Dorsolateral prefrontal cortex (tissue), 120 donors: ENCODE measurements at regions of chr1 and their contacts with region 1.

Region 1: GRCh38 chr1:180527101-180527669 is 24.8 kb upstream of the ACBD6 start:
- DNase-seq: peak in 1 of 10 donors; percentile 5
- H3K4me3 ChIP-seq: no peak overlapping the region
- H3K27ac ChIP-seq: no peak overlapping the region
- H3K27me3 ChIP-seq: no peaks in the 10 kb centered on the region
- CTCF ChIP-seq: no peak

Region 2: GRCh38 chr1:181424786-181425403 is 897.7 kb after region 1 on chr1:
- intact Hi-C with region 1: loop called in 1 of 2 experiments (anchors 10 kb)
- DNase-seq: peak; percentile 60 to 85 (median 75)
- H3K4me3 ChIP-seq: peak overlapping the region in 20 of 59 donors; percentile 11 to 46 (median 32)
- H3K27ac ChIP-seq: peak overlapping the region in 1 of 59 donors; percentile 31
- H3K27me3 ChIP-seq: peaks cover 0 to 6% (median 0%) of the 10 kb centered on the region in 45 donors
- CTCF ChIP-seq: peak; percentile 97 to 100 (median 99)